Aorta (tissue), 5 donors: ENCODE measurements at regions of chr22 and their contacts with region 1.

Region 1: GRCh38 chr22:44080936-44081861 is 57.1 kb downstream of the PARVB start:
- DNase-seq: peak; percentile 87 to 89
- ATAC-seq: no peak
- H3K4me3 ChIP-seq: no peak overlapping the region
- H3K27ac ChIP-seq: no peak overlapping the region
- H3K4me1 ChIP-seq: no peaks in the 10 kb centered on the region
- H3K27me3 ChIP-seq: no peaks in the 10 kb centered on the region

Region 2: GRCh38 chr22:43993027-43993760 is 88.0 kb before region 1 on chr22:
- intact Hi-C with region 1: loop called in 1 of 2 experiments (anchors 5 kb)
- DNase-seq: peak in 1 of 2 donors; percentile 58
- ATAC-seq: peak; percentile 81
- H3K4me3 ChIP-seq: no peak overlapping the region
- H3K27ac ChIP-seq: no peak overlapping the region
- H3K4me1 ChIP-seq: no peaks in the 10 kb centered on the region
- H3K27me3 ChIP-seq: no peaks in the 10 kb centered on the region

Region 3: DNA sequence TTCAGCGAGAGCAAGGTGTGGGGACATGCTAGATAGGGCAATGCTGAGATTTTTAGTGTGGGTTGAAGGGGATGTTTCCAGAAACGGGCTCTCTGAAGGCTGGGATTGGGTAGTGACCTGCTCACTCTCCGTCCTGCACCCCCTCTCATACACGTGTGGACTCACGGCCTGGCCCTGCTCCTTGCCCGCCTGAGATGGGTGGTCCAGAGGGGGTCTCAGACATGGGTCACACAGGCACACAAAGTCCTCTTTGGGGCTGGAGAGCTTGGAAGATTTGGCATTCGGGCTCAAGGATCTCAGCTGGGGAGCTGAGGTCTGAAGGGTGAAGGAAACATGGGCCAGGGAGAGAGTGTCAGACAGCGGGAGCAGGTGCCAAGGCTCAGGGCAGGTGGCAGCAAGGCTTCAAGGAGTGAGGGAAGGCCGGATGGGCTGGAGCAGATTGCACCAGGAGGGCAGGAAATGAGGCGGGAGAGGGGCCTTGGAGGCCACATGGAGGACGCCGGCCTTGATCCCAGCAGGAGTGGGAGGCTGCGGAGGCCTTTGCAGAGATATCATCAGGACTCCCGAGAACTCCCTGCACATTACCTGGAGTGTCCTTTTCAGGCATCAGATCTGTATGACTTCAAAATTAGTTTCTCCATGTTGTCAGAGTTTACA is 17.0 kb after region 1 on chr22:
- intact Hi-C with region 1: no loop called
- DNase-seq: peak; percentile 24 to 36
- ATAC-seq: no peak
- H3K4me3 ChIP-seq: no peak overlapping the region
- H3K27ac ChIP-seq: no peak overlapping the region
- H3K4me1 ChIP-seq: no peaks in the 10 kb centered on the region
- H3K27me3 ChIP-seq: no peaks in the 10 kb centered on the region

Region 4: DNA sequence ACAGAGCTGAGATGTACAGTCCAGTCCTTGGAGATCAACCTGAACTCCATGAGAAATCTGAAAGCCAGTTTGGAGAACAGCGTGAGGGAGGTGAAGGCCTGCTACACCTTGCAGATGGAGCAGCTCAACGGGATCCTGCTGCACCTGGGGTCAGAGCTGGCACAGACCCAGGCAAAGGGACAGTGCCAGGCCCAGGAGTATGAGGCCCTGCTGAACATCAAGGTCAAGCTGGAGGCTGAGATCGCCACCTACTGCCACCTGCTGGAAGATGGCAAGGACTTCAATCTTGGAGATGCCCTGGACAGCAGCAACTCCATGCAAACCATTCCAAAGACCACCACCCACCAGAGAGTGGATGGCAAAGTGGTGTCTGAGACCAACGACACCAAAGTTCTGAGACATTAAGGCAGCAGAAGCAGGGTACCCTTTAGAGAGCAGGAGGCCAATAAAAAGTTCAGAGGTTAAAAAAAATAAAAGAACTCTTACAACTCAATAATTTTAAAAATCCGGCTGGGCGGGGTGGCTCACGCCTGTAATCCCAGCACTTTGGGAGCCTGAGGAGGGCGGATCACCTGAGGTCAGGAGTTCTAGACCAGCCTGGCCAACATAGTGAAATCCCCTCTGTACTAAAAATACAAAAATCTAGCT is 486.8 kb after region 1 on chr22:
- intact Hi-C with region 1: loop called in 1 of 2 experiments (anchors 1 kb)
- DNase-seq: peak; percentile 65 to 72
- ATAC-seq: no peak
- H3K4me3 ChIP-seq: no peak overlapping the region
- H3K27ac ChIP-seq: no peak overlapping the region
- H3K4me1 ChIP-seq: no peaks in the 10 kb centered on the region
- H3K27me3 ChIP-seq: no peaks in the 10 kb centered on the region

Region 5: DNA sequence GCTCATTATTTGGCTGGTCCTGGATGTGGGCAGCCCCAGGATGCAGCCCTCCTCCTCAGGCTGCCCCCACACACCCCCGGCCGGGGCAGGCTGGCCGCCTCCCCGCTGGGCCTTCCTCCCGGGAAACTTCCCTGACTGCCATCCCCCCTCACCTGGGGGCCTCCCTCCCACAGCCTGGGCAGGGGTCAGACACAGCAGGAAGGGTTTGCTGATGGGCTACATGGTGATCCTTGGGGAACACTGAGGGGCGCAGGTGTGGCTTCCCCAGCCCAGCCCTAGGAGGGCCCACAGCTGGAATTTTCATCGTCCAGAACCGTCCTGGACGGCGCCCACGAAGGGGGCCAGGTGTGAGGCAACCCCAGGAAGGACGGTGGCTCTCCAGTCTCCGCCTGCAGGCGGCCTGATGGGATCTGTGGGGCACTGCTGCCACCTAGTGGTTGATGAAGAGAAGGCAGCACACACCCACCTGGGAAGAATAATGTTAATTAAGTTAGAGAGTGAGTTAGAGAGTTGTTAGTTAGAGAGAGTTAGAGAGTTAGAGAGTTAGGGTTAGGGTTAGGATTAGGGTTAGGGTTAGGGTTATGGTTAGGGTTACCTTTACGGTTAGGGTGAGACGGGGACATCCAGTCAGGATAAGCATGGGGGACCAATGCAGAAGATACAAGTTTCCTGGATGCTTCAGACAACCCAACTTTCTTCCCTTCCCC is 544.9 kb after region 1 on chr22:
- intact Hi-C with region 1: loop called (anchors 1 to 2 kb)
- DNase-seq: peak; percentile 78 to 88
- ATAC-seq: peak; percentile 79
- H3K4me3 ChIP-seq: no peak overlapping the region
- H3K27ac ChIP-seq: no peak overlapping the region
- H3K4me1 ChIP-seq: no peaks in the 10 kb centered on the region
- H3K27me3 ChIP-seq: no peaks in the 10 kb centered on the region